Prostate gland (tissue), 2 donors: ENCODE measurements at regions of chr18 and their contacts with region 1.

Region 1: GRCh38 chr18:24488824-24489493 is 28.5 kb downstream of the HRH4 start:
- DNase-seq: no peak
- H3K4me3 ChIP-seq: no peak overlapping the region
- H3K27ac ChIP-seq: no peak overlapping the region
- H3K4me1 ChIP-seq: no peaks in the 10 kb centered on the region
- H3K27me3 ChIP-seq: no peaks in the 10 kb centered on the region
- CTCF ChIP-seq: peak; percentile 56 to 85 (median 79)
- POLR2A ChIP-seq: no peak

Region 2: GRCh38 chr18:24362758-24363157 is 126.2 kb before region 1 on chr18:
- intact Hi-C with region 1: loop called (anchors 5 kb)
- DNase-seq: peak; percentile 55
- H3K4me3 ChIP-seq: no peak overlapping the region
- H3K27ac ChIP-seq: peak overlapping the region; percentile 42 to 48
- H3K4me1 ChIP-seq: no peaks in the 10 kb centered on the region
- H3K27me3 ChIP-seq: no peaks in the 10 kb centered on the region
- CTCF ChIP-seq: no peak
- POLR2A ChIP-seq: no peak